AG04449 (cell line): ENCODE measurements at regions of chr3 and their contacts with region 1.

Region 1: DNA sequence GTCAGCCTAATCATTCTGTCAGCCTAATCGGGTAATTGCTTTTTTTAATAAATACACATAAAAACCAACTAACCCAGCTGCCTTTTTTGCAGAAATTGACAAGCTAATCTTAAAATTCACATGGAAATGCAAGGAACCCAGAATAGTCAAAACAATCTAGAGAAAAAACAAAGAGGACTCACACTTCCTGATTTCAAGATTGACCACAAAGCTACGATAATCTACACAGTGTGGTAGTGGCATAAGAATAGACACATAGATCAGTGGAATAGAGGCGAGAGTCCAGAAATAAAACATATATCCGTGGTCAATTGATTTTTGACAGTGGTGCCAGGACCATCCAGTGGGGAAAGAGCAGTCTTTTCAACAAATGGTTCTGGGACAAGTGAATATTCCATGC is 2.4 kb upstream of the C3orf20 start:
- DNase-seq: no peak
- H3K4me3 ChIP-seq: no peak overlapping the region
- CTCF ChIP-seq: no peak

Region 2: GRCh38 chr3:14426063-14426620 is 246.4 kb before region 1 on chr3:
- CTCF ChIA-PET with region 1: no interaction called
- POLR2A ChIA-PET with region 1: no interaction called
- DNase-seq: no peak
- H3K4me3 ChIP-seq: no peak overlapping the region
- CTCF ChIP-seq: no peak

Region 3: DNA sequence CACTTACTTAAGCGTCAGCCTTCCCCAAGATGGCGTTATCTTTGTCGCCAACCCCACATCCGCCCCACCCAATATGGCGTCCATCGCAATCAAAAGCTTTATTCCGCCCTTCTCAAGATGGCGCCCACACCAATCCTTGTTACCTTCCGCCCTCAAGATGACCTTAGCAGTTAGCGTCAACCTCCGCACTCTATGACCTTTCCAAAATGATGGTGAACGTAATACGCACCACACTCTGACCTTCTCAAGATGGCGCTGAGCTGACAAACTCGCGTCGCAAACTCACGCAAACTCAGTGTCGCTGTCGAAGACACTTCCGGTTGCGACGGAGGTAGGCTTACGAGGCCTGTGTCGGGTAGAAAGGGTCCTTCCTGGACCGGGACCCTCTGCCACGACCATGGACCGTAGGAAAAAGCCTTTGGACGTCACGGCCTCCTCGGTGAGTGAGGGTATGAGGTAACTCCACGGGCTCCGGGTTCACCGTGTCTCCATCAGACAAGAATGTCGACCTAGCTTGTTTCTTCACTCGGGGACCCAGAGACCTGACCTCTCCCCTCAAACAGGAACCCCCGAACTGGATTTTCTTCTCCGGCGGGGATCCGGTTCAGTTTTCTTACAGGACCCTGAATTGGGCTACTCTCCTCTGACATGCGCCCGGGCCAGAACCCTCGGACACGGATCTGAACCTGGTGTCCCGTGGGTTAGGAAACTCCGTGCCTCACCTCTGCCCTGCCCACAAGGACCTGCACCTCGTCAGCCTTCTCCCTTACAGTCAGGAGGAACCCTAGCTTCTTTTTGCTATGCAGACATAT is 20.9 kb before region 1 on chr3 and contains the start of gene CCDC174:
- CTCF ChIA-PET with region 1: interaction called, 17 read pairs
- POLR2A ChIA-PET with region 1: interaction called, 5 read pairs
- DNase-seq: peak; percentile 97
- H3K4me3 ChIP-seq: peak within 1 kb of the TSS; percentile 90
- CTCF ChIP-seq: no peak

Region 4: GRCh38 chr3:14660907-14661306 is 11.7 kb before region 1 on chr3:
- CTCF ChIA-PET with region 1: interaction called, 18 read pairs
- POLR2A ChIA-PET with region 1: no interaction called
- DNase-seq: no peak
- H3K4me3 ChIP-seq: no peak overlapping the region
- CTCF ChIP-seq: no peak

Region 5: DNA sequence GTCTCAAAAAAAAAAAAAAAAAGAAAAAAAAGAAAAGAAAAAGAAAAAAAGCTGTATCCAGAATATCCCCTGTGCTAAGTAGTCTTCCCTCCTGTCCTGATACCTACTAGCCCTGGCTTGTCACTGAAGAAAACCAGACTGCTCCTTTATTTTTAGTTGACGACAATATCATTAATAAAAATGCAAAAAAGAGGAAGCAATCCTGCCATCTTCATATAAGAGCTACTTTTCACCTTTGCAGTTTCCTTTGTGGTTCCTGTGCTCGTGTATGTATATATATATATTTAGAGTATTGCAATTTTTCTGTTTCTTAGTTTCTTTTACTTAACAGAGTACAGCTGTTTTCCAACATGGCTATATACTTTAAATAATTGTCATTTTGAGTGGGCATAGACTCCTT is 15.9 kb after region 1 on chr3:
- CTCF ChIA-PET with region 1: interaction called, 10 read pairs
- POLR2A ChIA-PET with region 1: no interaction called
- DNase-seq: no peak
- H3K4me3 ChIP-seq: no peak overlapping the region
- CTCF ChIP-seq: no peak

Region 6: GRCh38 chr3:14725013-14725412 is 52.4 kb after region 1 on chr3:
- CTCF ChIA-PET with region 1: no interaction called
- POLR2A ChIA-PET with region 1: no interaction called
- DNase-seq: peak; percentile 12
- H3K4me3 ChIP-seq: no peak overlapping the region
- CTCF ChIP-seq: no peak

Region 7: DNA sequence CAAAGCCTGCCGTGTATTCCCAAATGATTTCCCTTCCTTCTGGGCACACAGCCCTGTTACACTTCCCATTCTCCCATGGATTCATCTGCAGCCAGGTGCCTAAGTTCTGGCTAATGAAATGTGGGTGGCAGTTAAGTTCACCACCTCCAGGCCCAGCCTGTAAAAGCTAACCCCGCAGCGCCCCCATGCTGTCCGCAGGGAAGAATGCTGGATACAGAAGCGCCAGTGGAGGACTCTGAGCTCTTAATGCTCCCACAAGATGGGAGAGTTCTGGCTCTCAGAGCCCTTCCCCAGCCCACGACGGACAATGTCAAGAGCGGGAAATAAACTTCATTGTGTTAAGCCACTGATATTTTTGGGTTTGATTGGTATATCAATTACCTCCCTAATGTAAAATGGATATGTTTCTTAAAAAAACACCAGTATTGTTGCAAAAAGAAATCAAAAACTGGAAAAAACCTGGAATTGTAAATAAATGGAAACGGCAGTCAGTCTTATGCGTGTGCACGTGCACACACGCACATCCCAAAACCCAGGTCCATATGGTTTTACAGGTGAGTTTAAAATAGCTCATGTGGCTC is 108.4 kb after region 1 on chr3:
- CTCF ChIA-PET with region 1: interaction called, 20 read pairs
- POLR2A ChIA-PET with region 1: no interaction called
- DNase-seq: no peak
- H3K4me3 ChIP-seq: no peak overlapping the region
- CTCF ChIP-seq: peak; percentile 56